T-cell (primary cell): ENCODE measurements at regions of chr5 and their contacts with region 1.

Region 1: DNA sequence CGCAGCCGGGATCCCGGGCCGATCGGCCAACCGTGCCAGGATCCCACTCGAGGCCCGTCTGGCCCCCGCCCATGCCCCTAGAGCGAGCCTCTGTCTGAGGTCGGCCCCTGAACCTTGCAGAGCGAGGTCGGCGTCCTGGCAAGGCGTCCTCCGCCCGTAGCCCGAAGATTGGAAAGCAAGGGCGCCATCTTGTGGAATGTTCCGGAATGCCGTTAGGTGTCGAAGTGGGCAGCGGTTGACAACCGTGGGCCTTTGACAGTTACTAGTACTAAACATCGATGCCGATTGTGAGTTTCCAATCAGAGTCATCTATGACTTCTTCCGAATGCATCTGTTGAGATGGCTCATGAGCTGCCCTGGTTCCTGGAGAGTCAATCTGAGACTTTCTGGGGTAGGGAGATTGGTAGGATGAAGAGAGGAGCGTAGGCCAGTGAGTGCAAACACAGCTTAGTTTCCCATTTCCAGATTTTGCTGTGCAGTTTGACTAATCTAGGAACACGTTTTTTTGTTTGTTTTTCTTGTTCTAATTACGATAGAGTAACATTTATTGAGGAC is 923 bp upstream of the PLK2 start:
- DNase-seq: peak; percentile 58 to 93 (median 83)
- ATAC-seq: peak; percentile 69 to 76 (median 74)
- H3K4me3 ChIP-seq: peak overlapping the region; percentile 74 to 85
- H3K4me3 Mint-ChIP-seq: peak overlapping the region; percentile 82 to 84 (median 84)
- H3K27ac ChIP-seq: peak overlapping the region; percentile 77
- H3K27ac Mint-ChIP-seq: peak overlapping the region; percentile 84 to 90
- H3K4me1 ChIP-seq: peaks cover 4 to 23% of the 10 kb centered on the region in 2 experiments
- H3K4me1 Mint-ChIP-seq: peaks cover 16 to 20% (median 18%) of the 10 kb centered on the region in 3 donors
- H3K27me3 ChIP-seq: peaks cover 0 to 4% of the 10 kb centered on the region in 2 experiments
- H3K27me3 Mint-ChIP-seq: peaks cover 0 to 10% of the 10 kb centered on the region in 2 donors

Region 2: DNA sequence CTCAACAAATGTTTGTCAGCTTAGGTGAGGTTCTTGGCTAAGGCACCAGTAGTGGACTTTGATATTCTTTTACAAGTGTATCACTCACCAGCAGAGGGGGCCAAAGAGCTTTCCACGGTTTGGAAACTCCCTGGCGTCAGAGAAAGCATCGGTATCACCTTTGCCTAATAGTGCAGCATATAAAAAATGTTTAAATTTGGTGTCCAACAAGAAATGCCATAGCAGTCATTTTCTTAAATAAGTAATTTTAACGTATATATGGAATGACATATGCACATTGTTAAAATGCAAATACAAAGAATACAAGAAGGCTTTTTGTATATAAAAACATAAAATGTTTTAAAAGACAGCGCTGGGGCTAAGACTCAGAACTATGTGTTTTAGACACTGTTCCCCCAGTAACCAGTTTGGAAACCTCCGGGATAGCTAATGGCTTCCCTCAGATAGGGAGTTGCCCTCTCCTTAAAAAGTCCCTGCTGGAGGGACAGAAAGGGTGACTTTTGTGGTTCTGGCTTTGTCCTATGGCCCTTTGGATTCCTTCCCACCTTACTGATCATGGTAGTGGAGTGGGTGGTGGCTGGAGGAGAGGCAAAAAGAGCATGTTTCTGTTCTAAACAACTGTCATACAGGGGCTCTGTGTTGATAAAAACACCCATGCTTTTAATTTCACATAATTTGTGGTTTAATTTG is 1162.4 kb before region 1 on chr5:
- CTCF ChIA-PET with region 1: interaction called, 18 to 52 read pairs
- POLR2A ChIA-PET with region 1: interaction called, 4 to 15 read pairs
- DNase-seq: peak; percentile 59 to 94 (median 81)
- ATAC-seq: peak; percentile 66 to 87 (median 74)
- H3K4me3 ChIP-seq: peak overlapping the region; percentile 29 to 41
- H3K4me3 Mint-ChIP-seq: peak overlapping the region; percentile 66 to 73 (median 73)
- H3K27ac ChIP-seq: peak overlapping the region; percentile 30
- H3K27ac Mint-ChIP-seq: peak overlapping the region in 1 of 2 donors; percentile 68
- H3K4me1 ChIP-seq: peaks cover 7 to 12% of the 10 kb centered on the region in 2 experiments
- H3K4me1 Mint-ChIP-seq: peaks cover 10 to 21% (median 19%) of the 10 kb centered on the region in 3 donors
- H3K27me3 ChIP-seq: no peaks in the 10 kb centered on the region
- H3K27me3 Mint-ChIP-seq: no peaks in the 10 kb centered on the region

Region 3: DNA sequence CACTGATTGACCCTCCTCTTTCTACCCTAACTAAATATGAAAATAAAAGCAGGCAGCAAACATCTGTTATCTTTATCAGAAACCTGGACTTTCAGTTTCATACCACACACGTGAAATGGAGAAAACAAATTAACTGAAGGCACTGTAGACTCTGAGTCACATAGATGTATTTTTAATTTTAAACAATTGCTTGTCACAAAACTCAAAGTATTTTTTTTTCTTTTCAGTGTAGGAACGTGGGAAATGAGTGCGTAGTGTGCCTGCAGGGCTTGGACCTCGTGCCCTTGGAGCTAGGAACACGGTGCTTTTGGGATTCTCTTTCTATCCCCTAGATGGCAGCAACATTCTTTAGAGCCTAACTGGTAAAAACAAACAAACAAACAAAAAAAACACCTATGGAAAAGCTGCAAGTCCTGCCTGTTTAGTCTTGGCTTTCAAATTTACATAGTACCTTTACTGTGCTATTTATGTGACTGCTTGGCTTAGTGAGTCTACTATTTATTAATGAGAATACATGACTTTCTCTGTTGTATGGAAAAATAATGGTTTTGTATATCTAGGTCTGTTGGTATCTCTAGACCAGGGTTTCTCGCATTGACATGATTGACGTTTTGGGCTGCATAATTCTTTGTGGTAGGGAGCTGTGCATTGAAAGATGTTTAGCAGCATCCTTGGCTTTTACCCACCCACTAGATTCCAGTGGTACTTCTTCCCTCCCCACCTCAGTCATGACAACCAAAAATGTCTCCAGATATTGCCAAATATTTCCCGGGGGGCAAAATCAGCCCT is 961.4 kb before region 1 on chr5:
- CTCF ChIA-PET with region 1: interaction called, 3 to 14 read pairs
- POLR2A ChIA-PET with region 1: interaction called in 1 of 2 experiments, 3 read pairs
- DNase-seq: peak in 1 of 35 experiments; percentile 34
- ATAC-seq: no peak
- H3K4me3 ChIP-seq: no peak overlapping the region
- H3K4me3 Mint-ChIP-seq: peak overlapping the region; percentile 40 to 61 (median 56)
- H3K27ac ChIP-seq: no peak overlapping the region
- H3K27ac Mint-ChIP-seq: peak overlapping the region; percentile 44 to 53
- H3K4me1 ChIP-seq: peaks cover 11 to 12% of the 10 kb centered on the region in 2 experiments
- H3K4me1 Mint-ChIP-seq: peaks cover 19 to 28% (median 26%) of the 10 kb centered on the region in 3 donors
- H3K27me3 ChIP-seq: no peaks in the 10 kb centered on the region
- H3K27me3 Mint-ChIP-seq: peaks cover 0 to 3% of the 10 kb centered on the region in 2 donors

Region 4: DNA sequence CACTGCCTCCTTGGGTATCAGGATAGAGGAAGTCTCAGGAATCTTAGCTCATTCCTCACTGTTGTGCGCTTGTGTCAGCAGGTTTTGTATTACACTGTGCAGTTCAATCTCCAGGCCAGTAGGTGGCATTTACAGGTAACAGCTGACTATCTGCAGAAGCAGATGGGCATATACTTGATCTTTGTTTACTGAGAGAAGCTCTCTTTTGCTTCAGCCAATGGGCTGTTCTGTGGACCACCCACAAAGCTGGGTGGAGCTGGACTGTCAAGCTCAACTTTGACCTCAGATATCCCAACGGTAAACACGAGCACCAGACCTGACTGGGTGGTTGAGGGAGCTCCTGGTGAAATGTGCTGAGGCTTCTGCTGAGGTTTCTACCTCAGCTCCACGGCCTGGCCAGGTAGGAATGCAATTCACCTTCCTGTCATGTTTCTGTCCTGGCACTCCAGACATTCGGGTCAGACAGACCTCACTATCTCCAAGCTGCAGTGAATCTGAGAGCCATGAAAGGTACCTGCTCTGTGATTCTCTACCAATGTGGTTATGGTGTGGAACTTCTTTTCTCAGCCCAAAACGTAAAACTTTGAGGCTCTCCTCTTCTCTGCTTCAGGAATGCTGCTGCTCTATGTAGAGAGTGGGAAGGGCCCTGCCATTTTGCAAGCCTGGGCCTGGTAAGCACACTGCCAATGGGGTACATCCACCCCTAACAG is 810.3 kb before region 1 on chr5:
- CTCF ChIA-PET with region 1: interaction called, 3 to 20 read pairs
- POLR2A ChIA-PET with region 1: no interaction called
- DNase-seq: peak in 6 of 35 experiments; percentile 1 to 33 (median 4)
- ATAC-seq: peak in 1 of 4 experiments; percentile 43
- H3K4me3 ChIP-seq: no peak overlapping the region
- H3K4me3 Mint-ChIP-seq: no peak overlapping the region
- H3K27ac ChIP-seq: no peak overlapping the region
- H3K27ac Mint-ChIP-seq: no peak overlapping the region
- H3K4me1 ChIP-seq: no peaks in the 10 kb centered on the region
- H3K4me1 Mint-ChIP-seq: no peaks in the 10 kb centered on the region
- H3K27me3 ChIP-seq: no peaks in the 10 kb centered on the region
- H3K27me3 Mint-ChIP-seq: peaks cover 11% of the 10 kb centered on the region in 2 donors

Region 5: GRCh38 chr5:57779383-57780223 is 681.2 kb before region 1 on chr5:
- CTCF ChIA-PET with region 1: interaction called, 5 to 24 read pairs
- POLR2A ChIA-PET with region 1: no interaction called
- DNase-seq: peak in 5 of 35 experiments; percentile 2 to 43 (median 7)
- ATAC-seq: peak in 1 of 4 experiments; percentile 53
- H3K4me3 ChIP-seq: no peak overlapping the region
- H3K4me3 Mint-ChIP-seq: no peak overlapping the region
- H3K27ac ChIP-seq: no peak overlapping the region
- H3K27ac Mint-ChIP-seq: no peak overlapping the region
- H3K4me1 ChIP-seq: no peaks in the 10 kb centered on the region
- H3K4me1 Mint-ChIP-seq: no peaks in the 10 kb centered on the region
- H3K27me3 ChIP-seq: peaks cover 0 to 5% of the 10 kb centered on the region in 2 experiments
- H3K27me3 Mint-ChIP-seq: peaks cover 0 to 8% of the 10 kb centered on the region in 2 donors